Breast epithelium (tissue), 4 donors: ENCODE measurements at regions of chr11 and their contacts with region 1.

Region 1: GRCh38 chr11:14249121-14249963 is 109.6 kb downstream of the RRAS2 start:
- DNase-seq: peak; percentile 43 to 64
- H3K4me3 ChIP-seq: no peak overlapping the region
- H3K27ac ChIP-seq: no peak overlapping the region
- H3K4me1 ChIP-seq: no peaks in the 10 kb centered on the region
- H3K27me3 ChIP-seq: no peaks in the 10 kb centered on the region
- CTCF ChIP-seq: peak; percentile 60 to 85 (median 83)
- POLR2A ChIP-seq: no peak

Region 2: DNA sequence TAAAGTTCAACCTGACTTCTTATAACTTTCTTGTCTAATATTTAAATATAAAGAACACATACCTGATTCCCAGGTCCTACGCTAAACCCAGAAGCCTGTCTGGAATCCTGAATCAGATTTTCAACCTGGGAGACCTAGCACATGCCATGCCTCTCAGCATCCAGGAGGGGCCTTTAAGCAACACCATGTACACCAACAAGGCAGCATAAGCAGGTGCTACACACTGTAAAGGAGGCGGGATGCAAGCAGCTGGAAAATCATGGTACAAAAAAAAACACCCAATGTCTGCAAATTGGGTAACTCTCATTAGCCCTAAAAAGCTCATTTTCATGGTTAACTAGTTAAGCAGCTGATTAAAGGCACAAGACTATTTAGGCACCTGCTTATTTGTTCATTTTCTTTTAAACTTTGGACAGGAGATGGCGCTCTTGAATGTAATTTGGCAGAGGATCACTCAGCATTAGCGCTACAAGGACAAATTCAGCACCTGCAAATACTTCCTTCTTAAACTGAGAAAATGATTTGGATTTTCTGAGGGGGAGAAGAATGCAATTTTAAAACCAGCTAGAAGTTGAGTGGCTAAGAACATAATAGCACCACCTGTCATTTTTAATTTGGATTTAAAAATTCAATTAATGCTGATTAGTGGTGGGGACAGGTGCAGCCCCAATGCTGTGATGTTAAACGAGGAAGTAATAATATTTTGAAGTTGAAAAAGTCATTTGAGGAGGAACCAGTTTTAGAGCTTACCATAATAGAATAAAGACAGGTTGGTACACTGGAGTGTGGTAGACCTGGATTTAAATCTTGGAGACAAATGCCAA is 476.9 kb before region 1 on chr11:
- intact Hi-C with region 1: loop called (anchors 10 kb)
- DNase-seq: no peak
- H3K4me3 ChIP-seq: no peak overlapping the region
- H3K27ac ChIP-seq: no peak overlapping the region
- H3K4me1 ChIP-seq: no peaks in the 10 kb centered on the region
- H3K27me3 ChIP-seq: no peaks in the 10 kb centered on the region
- CTCF ChIP-seq: peak in 2 of 3 donors; percentile 40 to 47
- POLR2A ChIP-seq: no peak

Region 3: DNA sequence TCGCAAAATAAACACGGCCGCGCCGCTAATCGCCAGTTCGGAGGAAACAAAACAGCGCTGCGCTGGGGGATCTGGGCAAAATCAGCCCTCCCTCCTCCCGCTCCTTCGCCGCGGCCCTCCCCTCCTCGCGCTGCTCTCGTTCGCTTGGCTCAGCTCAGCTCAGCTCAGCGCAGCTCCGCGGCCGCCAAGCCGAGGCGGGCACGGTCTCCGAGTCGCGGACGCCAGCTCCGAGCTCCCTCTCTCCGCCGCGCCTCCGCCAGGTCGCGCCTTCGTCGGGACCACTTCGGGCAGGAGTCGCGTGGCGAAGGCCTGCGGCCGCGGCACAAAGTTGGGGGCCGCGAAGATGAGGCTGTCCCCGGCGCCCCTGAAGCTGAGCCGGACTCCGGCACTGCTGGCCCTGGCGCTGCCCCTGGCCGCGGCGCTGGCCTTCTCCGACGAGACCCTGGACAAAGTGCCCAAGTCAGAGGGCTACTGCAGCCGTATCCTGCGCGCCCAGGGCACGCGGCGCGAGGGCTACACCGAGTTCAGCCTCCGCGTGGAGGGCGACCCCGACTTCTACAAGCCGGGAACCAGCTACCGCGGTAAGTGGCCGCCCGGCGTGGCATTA is 286.7 kb before region 1 on chr11 and contains the start of gene SPON1:
- intact Hi-C with region 1: loop called (anchors 10 kb)
- DNase-seq: no peak
- H3K4me3 ChIP-seq: peak within 1 kb of the TSS; percentile 35 to 71 (median 57)
- H3K27ac ChIP-seq: peak within 1 kb of the TSS; percentile 14 to 56
- H3K4me1 ChIP-seq: no peaks in the 10 kb centered on the region
- H3K27me3 ChIP-seq: peaks cover 0 to 42% of the 10 kb centered on the region in 2 donors
- CTCF ChIP-seq: no peak
- POLR2A ChIP-seq: no peak
- total RNA-seq, gene SPON1: 30.1 to 133 (median 34.7) TPM

Region 4: DNA sequence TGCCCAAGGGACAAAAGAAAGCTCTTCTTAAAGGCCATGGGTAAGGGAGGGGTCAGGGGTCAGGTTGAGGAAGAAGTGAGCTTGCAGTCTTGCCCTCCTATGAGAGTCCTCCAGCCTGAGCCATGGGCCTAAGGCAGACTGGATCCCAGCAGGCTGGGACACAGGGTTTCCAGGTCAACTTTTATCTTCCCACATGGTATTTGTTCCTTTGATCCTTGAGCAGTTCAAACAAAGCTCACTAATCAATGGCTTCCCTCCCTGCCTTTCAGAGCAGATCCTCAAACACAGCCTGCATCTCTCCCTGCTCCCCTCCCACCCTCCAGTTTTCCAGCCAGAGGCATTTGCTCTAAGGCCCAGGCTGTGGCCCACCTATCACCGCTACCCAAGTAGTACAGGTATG is 1454.7 kb after region 1 on chr11:
- intact Hi-C with region 1: no loop called
- DNase-seq: no peak
- H3K4me3 ChIP-seq: no peak overlapping the region
- H3K27ac ChIP-seq: no peak overlapping the region
- H3K4me1 ChIP-seq: no peaks in the 10 kb centered on the region
- H3K27me3 ChIP-seq: peaks cover 0 to 13% of the 10 kb centered on the region in 2 donors
- CTCF ChIP-seq: no peak
- POLR2A ChIP-seq: no peak